Panc1 (cell line): ENCODE measurements at regions of chr20 and their contacts with region 1.

Region 1: GRCh38 chr20:60507087-60507694 is 549.0 kb downstream of the CDH26 start:
- DNase-seq: no peak
- ATAC-seq: no peak
- H3K4me3 ChIP-seq: no peak overlapping the region
- H3K27ac ChIP-seq: no peak overlapping the region
- H3K4me1 ChIP-seq: no peaks in the 10 kb centered on the region
- H3K27me3 ChIP-seq: 0 out of 2 replicates have a peak, but pooled peaks cover 2% of the 10 kb centered on the region
- CTCF ChIP-seq: no peak

Region 2: DNA sequence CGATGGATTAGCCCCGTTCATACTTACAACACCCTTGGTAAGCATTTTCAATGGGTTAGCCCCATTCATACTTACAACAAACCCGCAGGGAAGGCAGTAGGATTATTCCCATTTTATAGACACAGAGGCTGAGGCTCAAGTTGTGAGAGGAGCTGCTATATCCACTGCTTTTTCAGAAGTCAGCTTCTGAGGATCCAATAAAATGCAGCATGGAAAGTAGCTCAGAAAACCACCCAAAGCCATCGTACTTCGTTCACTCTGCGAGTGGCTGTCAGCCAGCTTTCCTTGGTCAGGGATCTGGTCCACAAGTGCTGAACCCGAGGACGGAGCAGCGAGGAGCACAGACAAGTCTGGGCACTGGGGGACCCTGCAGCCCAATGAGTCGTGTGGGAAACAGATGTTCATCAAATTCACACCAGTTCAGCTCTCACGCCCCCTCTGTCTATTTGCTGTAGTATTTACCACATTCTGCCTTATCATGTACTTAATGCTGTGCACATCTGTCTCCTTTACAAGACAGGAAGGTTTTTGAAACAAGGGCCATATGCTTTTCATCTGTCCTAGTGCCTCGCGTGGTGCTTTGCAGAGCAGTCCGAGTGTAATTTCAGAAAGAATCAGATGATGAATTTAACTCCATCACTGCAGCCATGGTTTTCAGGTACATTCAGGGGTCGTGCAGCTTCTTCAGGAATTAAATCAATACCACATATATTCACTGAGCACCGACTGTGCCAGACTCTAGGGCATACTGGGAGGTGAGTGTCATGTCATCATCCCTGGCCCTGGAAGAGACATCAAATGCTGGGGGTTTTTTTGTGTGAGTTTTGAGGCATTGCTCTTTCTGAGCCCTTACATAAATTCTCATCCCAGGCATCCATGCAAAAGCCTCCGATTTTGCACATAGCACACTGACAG is 292.0 kb before region 1 on chr20:
- CTCF ChIA-PET with region 1: no interaction called
- POLR2A ChIA-PET with region 1: no interaction called
- in situ Hi-C with region 1: no loop called
- intact Hi-C with region 1: no loop called
- DNase-seq: no peak
- ATAC-seq: no peak
- H3K4me3 ChIP-seq: no peak overlapping the region
- H3K27ac ChIP-seq: no peak overlapping the region
- H3K4me1 ChIP-seq: no peaks in the 10 kb centered on the region
- H3K27me3 ChIP-seq: 0 out of 2 replicates have a peak, but pooled peaks cover 7% of the 10 kb centered on the region
- CTCF ChIP-seq: no peak

Region 3: GRCh38 chr20:60921022-60921622 is 413.9 kb after region 1 on chr20:
- CTCF ChIA-PET with region 1: no interaction called
- POLR2A ChIA-PET with region 1: no interaction called
- in situ Hi-C with region 1: no loop called
- intact Hi-C with region 1: loop called (anchors 5 kb)
- DNase-seq: no peak
- ATAC-seq: no peak
- H3K4me3 ChIP-seq: no peak overlapping the region
- H3K27ac ChIP-seq: no peak overlapping the region
- H3K4me1 ChIP-seq: no peaks in the 10 kb centered on the region
- H3K27me3 ChIP-seq: no peaks in the 10 kb centered on the region; the same call in 1 of the 2 replicates
- CTCF ChIP-seq: no peak